Sciatic nerve (tissue), 2 donors: ENCODE measurements at regions of chr7 and their contacts with region 1.

Region 1: DNA sequence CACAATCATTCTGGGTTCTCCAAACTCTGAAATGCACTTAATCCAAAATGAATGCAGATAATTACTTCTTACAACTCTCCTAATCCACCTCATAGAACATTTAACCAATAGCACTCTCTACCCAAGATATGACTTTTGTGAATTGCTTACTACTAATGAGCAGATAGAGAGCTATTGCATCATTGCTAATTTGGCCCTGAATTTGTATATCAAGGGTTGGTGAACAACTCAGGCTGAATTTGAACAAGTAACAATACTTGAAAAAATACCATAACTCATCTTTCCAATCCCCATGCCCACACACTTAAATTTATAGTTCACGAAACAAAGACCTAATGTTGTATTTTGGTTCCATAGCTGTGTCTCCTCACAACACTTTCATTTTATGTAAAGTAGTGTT is 246.0 kb downstream of the TSPAN12 start:
- DNase-seq: no peak
- ATAC-seq: no peak

Region 2: DNA sequence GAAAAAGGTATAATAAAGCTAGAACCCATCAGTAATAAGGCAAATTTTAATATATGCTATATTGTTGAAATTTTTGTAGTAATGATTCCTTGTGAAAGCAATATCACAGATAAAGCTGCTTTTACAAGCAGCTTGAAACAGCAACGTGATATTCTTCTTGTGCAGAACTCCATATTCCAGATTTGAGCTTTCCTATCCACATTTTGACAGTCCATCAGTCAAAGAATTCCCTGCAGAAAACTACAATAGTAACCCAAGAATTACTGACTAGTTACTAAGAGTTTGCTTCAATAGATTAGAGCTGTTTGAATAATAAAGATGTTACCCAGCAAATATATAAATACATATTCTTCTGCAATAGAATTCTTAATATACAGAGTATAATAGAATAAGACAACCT is 47.8 kb before region 1 on chr7:
- intact Hi-C with region 1: loop called (anchors 2 kb)
- DNase-seq: no peak
- ATAC-seq: no peak

Region 3: DNA sequence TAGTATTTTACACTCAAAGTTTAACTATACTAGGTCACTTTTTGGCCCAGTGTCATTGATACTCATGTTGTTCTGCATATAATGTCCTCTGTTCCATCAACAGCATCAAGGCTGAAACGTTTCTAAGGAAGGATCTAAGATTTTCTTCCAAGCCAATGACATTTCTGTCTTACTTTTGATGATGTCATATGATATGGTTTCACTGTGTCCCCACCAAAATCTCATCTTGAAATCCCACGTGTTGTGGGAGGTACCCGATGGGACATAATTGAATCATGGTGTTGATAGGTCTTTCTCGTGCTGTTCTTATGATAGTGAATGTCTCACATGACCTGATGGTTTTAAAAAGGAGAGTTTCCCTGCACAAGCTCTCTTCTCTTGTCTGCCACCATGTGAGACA is 282.3 kb after region 1 on chr7:
- intact Hi-C with region 1: loop called (anchors 5 kb)
- DNase-seq: no peak
- ATAC-seq: no peak